ENCODE measurements at regions of chr19 and their contacts with region 1.

Region 1: DNA sequence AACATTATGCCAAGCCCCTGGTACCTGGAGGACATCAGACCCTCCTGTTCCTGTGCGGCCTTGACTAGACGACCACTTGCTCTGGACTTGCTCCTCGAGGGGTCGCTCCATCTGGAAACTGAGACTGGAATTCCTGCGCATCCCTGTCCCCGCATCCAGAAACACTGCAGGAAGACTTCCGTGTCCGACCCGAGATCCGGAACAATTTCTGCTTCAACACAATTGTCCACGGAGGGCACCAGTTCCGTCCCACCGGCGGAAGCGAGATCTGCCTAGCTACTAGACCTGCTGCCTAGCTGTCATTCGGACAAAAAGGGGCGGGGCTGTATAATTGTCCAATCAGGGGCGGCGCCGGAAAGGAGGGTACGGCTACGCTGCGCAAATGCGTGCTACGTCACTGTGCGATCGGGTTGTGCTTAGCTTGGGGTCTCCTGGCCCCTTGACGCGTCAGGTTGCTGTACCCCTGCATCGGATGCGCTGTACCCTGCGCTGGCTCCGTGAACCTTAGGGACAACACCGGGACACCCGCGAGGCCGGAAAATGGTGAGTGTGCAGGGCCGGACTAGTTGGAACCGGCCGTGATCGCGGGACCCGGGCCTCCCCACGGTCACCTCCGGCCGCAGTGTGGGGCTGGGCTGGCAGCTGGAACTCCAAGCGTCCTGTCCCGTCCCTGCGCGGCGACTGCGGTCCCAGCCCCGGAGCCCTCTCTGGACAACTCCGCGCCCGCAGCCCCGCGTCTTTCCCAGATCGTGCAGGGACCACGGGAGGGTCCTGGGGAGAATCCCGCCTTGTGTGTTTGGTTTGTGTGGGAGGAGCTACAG is at the starts of genes ZNF490 and ZNF791:
- DNase-seq: peak; percentile 96
- ATAC-seq: peak; percentile 98
- H3K4me3 ChIP-seq: peak within 1 kb of the TSS; percentile 71 to 98
- H3K27ac ChIP-seq: peak within 1 kb of the TSS; percentile 97
- H3K4me1 ChIP-seq: peaks cover 5 to 6% of the 10 kb centered on the region in 2 experiments; a peak in 2 of 4 replicates
- H3K27me3 ChIP-seq: no peaks in the 10 kb centered on the region
- CTCF ChIP-seq: 0 out of 6 replicates have a peak, but pooled peaks of 1 of the 3 experiments have one; percentile 18
- POLR2A ChIP-seq: peak; percentile 61
- RAD21 ChIP-seq: no peak
- total RNA-seq, gene ZNF490: 5.8 TPM
- total RNA-seq, gene ZNF791: 21.2 TPM

Region 2: DNA sequence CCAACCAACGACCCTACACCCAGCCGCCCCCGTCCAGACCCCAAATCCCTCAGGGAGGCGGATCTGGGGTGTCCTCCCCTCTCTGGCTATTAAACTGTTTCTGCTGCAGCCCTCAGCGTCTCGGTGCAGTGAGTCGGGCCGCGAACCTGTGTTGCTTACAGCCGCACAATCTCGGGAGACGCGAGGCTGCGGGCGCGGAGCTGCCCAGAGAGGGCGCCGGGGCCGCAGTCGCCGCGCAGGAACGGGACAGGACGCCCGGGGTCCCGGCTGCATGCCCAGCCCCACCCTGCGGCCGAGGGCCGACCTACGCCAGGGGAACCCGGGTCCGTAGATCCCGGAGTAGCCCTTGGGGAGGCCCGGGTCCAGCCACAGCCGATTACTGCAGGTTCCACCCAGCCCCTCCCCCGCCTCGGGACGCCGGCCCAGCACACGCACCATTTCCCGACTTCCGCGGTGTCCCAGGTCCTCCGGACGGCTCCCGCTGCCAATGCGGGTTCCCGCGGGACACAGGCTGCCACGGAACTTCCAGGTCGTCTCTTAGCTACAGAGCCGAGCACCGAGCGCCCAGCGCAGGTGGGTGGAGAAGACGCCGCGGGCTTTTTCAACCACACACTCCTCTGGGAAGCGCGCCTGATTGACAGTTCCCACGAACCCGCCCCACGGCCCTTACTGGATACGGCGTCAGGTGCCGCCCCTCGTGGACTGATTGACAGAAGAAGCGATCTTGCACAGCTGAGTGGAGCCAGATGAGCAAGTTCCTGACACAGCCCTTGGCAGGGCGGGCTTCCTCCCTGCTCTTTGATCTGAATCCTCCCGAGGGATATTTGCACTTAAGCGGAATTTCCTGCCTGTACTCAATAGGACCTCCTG is 209.9 kb before region 1 on chr19 and contains the start of gene ZNF799:
- CTCF ChIA-PET with region 1: no interaction called
- POLR2A ChIA-PET with region 1: interaction called, 3 read pairs
- RAD21 ChIA-PET with region 1: no interaction called
- intact Hi-C with region 1: loop called (anchors 5 kb)
- DNase-seq: peak; percentile 94
- ATAC-seq: peak; percentile 95
- H3K4me3 ChIP-seq: peak within 1 kb of the TSS; percentile 72 to 82
- H3K27ac ChIP-seq: peak within 1 kb of the TSS; percentile 76
- H3K4me1 ChIP-seq: peaks cover 3 to 9% of the 10 kb centered on the region in 2 experiments; a peak in 2 of 4 replicates
- H3K27me3 ChIP-seq: no peaks in the 10 kb centered on the region
- CTCF ChIP-seq: 0 out of 6 replicates have a peak, but pooled peaks of 1 of the 3 experiments have one; percentile 16
- POLR2A ChIP-seq: no peak
- RAD21 ChIP-seq: no peak
- total RNA-seq, gene ZNF799: 3.6 TPM

Region 3: DNA sequence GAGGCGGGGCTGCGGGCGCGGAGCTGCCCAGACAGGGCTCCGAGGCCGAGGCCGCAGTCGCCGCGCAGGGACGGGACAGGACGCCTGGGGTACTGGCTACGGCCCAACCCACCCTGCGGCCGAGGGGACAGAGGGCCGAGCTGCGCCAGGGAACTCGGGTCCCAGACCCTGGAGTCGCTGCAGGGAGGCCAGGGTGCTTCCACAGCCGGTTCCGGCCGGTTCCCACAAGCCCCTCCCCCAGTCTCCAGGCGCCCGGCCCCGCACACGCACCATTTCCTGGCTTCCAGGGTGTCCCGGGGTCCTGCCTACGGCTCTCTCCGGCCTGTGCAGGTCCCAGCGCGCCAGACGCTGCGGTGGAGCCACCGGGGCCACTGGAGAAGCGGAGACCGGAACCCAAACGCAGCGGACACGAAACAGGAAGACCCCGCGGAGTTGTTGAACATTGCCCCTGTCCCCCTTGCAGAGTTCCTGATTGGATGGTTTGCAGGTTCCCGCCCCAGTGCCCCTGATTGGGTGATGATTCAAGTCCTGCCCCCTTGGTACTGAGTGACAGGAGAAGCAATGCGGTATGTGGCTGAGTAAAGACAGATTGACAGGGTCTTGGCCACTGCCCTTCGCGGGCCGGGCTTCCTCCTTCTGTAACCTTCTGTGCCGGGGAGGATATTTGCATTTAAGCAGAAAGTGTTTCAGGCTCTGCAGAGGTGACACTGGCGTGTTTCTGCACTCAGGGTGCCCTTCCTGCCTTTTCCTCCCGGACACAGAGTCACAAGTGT is 59.5 kb before region 1 on chr19 and contains the start of gene ZNF564:
- CTCF ChIA-PET with region 1: no interaction called
- POLR2A ChIA-PET with region 1: interaction called, 10 read pairs
- RAD21 ChIA-PET with region 1: no interaction called
- intact Hi-C with region 1: loop called (anchors 5 kb)
- DNase-seq: peak; percentile 98
- ATAC-seq: peak; percentile 97
- H3K4me3 ChIP-seq: peak within 1 kb of the TSS; percentile 86 to 90
- H3K27ac ChIP-seq: peak within 1 kb of the TSS; percentile 89
- H3K4me1 ChIP-seq: peaks cover 8 to 13% of the 10 kb centered on the region in 2 experiments
- H3K27me3 ChIP-seq: no peaks in the 10 kb centered on the region
- CTCF ChIP-seq: no peak
- POLR2A ChIP-seq: peak; percentile 65
- RAD21 ChIP-seq: no peak
- total RNA-seq, gene ZNF564: 6.1 TPM

Region 4: GRCh38 chr19:12564016-12564664 is 46.6 kb before region 1 on chr19:
- CTCF ChIA-PET with region 1: no interaction called
- POLR2A ChIA-PET with region 1: no interaction called
- RAD21 ChIA-PET with region 1: no interaction called
- intact Hi-C with region 1: loop called (anchors 2 kb)
- DNase-seq: peak; percentile 74
- ATAC-seq: peak; percentile 95
- H3K4me3 ChIP-seq: no peak overlapping the region
- H3K27ac ChIP-seq: no peak overlapping the region
- H3K4me1 ChIP-seq: peaks cover 0 to 5% of the 10 kb centered on the region in 2 experiments; a peak in 1 of 4 replicates
- H3K27me3 ChIP-seq: no peaks in the 10 kb centered on the region
- CTCF ChIP-seq: peak; percentile 72 to 98 (median 97); a peak in 5 of 6 replicates
- POLR2A ChIP-seq: no peak
- RAD21 ChIP-seq: peak; percentile 90

Region 5: DNA sequence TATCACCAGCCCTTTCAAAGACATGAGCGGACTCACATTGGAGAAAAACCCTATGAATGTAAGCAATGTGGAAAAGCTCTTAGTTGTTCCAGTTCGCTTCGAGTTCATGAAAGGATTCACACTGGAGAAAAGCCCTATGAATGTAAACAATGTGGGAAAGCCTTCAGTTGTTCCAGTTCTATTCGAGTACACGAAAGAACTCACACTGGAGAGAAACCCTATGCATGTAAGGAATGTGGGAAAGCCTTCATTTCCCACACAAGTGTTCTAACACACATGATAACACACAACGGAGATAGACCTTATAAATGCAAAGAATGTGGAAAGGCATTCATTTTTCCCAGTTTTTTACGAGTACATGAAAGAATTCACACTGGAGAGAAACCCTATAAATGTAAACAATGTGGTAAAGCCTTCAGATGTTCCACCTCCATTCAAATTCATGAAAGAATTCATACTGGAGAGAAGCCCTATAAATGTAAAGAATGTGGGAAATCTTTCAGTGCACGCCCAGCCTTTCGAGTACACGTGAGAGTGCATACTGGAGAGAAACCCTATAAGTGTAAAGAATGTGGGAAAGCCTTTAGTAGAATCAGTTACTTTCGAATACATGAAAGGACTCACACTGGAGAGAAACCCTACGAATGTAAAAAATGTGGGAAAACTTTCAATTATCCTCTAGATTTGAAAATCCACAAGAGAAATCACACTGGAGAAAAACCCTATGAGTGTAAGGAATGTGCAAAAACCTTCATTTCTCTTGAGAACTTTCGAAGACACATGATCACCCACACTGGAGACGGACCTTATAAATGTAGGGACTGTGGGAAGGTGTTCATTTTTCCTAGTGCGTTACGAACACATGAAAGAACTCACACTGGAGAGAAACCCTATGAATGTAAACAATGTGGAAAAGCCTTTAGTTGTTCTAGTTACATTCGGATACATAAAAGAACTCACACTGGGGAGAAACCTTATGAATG is 17.6 kb after region 1 on chr19:
- CTCF ChIA-PET with region 1: no interaction called
- POLR2A ChIA-PET with region 1: no interaction called
- RAD21 ChIA-PET with region 1: no interaction called
- intact Hi-C with region 1: no loop called
- DNase-seq: no peak
- ATAC-seq: no peak
- H3K4me3 ChIP-seq: no peak overlapping the region
- H3K27ac ChIP-seq: no peak overlapping the region
- H3K4me1 ChIP-seq: no peaks in the 10 kb centered on the region
- H3K27me3 ChIP-seq: no peaks in the 10 kb centered on the region
- CTCF ChIP-seq: no peak
- POLR2A ChIP-seq: no peak
- RAD21 ChIP-seq: no peak

Region 6: GRCh38 chr19:12666265-12667048 is 55.7 kb after region 1 on chr19 and contains the starts of genes MAN2B1 and WDR83:
- CTCF ChIA-PET with region 1: interaction called, 3 read pairs
- POLR2A ChIA-PET with region 1: no interaction called
- RAD21 ChIA-PET with region 1: no interaction called
- intact Hi-C with region 1: loop called (anchors 5 kb)
- DNase-seq: no peak
- ATAC-seq: peak; percentile 81
- H3K4me3 ChIP-seq: peak within 1 kb of the TSS; percentile 61 to 84
- H3K27ac ChIP-seq: peak within 1 kb of the TSS; percentile 58
- H3K4me1 ChIP-seq: peaks cover 19 to 37% of the 10 kb centered on the region in 2 experiments
- H3K27me3 ChIP-seq: no peaks in the 10 kb centered on the region
- CTCF ChIP-seq: no peak
- POLR2A ChIP-seq: no peak
- RAD21 ChIP-seq: no peak
- total RNA-seq, gene MAN2B1: 48.3 TPM
- total RNA-seq, gene WDR83: 20.1 TPM